MCF 10A (cell line): ENCODE measurements at regions of chr3 and their contacts with region 1.

Region 1: DNA sequence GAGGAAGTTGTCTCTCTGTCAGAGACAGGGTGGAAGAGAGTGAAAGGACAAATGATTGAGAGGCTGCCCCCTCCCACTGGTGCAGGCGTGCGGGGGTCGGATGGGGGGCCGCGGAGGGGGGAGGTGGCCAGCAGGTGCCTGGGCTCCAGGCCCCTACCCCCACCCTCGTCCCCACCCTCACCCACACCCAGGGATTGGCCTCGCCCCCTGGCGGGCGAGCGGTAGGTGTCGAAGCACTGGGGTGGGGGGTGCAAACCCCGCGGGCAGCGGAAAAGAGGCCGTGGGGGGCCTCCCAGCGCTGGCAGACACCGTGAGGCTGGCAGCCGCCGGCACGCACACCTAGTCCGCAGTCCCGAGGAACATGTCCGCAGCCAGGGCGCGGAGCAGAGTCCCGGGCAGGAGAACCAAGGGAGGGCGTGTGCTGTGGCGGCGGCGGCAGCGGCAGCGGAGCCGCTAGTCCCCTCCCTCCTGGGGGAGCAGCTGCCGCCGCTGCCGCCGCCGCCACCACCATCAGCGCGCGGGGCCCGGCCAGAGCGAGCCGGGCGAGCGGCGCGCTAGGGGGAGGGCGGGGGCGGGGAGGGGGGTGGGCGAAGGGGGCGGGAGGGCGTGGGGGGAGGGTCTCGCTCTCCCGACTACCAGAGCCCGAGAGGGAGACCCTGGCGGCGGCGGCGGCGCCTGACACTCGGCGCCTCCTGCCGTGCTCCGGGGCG is at the start of gene KAT2B:
- DNase-seq: peak; percentile 70
- H3K4me3 Mint-ChIP-seq: peak within 1 kb of the TSS; percentile 95
- H3K27ac Mint-ChIP-seq: peak within 1 kb of the TSS; percentile 70
- H3K4me1 Mint-ChIP-seq: peaks cover 23% of the 10 kb centered on the region
- H3K27me3 Mint-ChIP-seq: no peaks in the 10 kb centered on the region
- CTCF ChIP-seq: no peak
- total RNA-seq, gene KAT2B: 9.4 and 10.4 TPM in 2 replicates

Region 2: DNA sequence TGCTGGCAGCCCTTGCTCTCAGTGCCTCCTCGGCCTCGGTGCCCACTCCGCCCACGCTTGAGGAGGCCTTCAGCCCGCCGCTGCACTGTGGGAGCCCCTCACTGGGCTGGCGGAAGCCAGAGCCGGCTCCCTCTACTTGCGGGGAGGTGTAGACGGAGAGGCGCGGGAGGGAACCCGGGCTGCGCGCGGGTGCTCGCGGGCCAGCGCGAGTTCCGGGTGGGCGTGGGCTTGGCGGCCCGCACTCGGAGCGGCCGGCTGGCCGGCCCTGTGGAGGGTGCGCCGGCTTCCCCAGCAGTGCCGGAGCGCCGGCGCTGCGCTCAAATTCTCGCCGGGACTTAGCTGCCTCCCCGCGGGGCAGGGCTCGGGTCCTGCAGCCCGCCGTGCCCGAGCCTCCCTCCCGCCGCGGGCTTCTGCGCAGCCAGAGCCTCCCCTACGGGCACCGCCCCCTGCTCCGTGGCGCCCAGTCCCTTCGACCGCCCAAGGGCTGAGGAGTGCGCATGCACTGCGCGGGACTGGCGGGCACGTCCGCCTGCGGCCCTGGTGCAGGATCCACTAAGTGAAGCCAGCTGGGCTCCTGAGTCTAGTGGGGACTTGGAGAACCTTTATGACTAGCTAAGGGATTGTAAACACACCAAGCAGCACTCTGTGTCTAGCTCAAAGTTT is 337.4 kb before region 1 on chr3:
- CTCF ChIA-PET with region 1: no interaction called
- POLR2A ChIA-PET with region 1: no interaction called
- intact Hi-C with region 1: no loop called
- DNase-seq: no peak
- H3K4me3 Mint-ChIP-seq: no peak overlapping the region
- H3K27ac Mint-ChIP-seq: no peak overlapping the region
- H3K4me1 Mint-ChIP-seq: no peaks in the 10 kb centered on the region
- H3K27me3 Mint-ChIP-seq: no peaks in the 10 kb centered on the region
- CTCF ChIP-seq: no peak

Region 3: GRCh38 chr3:19885468-19885867 is 154.5 kb before region 1 on chr3:
- CTCF ChIA-PET with region 1: no interaction called
- POLR2A ChIA-PET with region 1: no interaction called
- intact Hi-C with region 1: loop called (anchors 5 kb)
- DNase-seq: peak; percentile 45
- H3K4me3 Mint-ChIP-seq: no peak overlapping the region
- H3K27ac Mint-ChIP-seq: no peak overlapping the region
- H3K4me1 Mint-ChIP-seq: peaks cover 15% of the 10 kb centered on the region
- H3K27me3 Mint-ChIP-seq: no peaks in the 10 kb centered on the region
- CTCF ChIP-seq: peak; percentile 38

Region 4: GRCh38 chr3:19946832-19947548 is 92.9 kb before region 1 on chr3 and contains the start of gene RAB5A:
- CTCF ChIA-PET with region 1: no interaction called
- POLR2A ChIA-PET with region 1: interaction called, 26 read pairs
- intact Hi-C with region 1: loop called (anchors 2 kb)
- DNase-seq: peak; percentile 98
- H3K4me3 Mint-ChIP-seq: peak within 1 kb of the TSS; percentile 85
- H3K27ac Mint-ChIP-seq: peak within 1 kb of the TSS; percentile 98
- H3K4me1 Mint-ChIP-seq: peaks cover 13% of the 10 kb centered on the region
- H3K27me3 Mint-ChIP-seq: no peaks in the 10 kb centered on the region
- CTCF ChIP-seq: no peak
- total RNA-seq, gene RAB5A: 89.8 and 102 TPM in 2 replicates

Region 5: GRCh38 chr3:20054549-20054987 is 14.6 kb after region 1 on chr3:
- CTCF ChIA-PET with region 1: interaction called, 19 read pairs
- POLR2A ChIA-PET with region 1: interaction called, 88 read pairs
- intact Hi-C with region 1: loop called (anchors 2 kb)
- DNase-seq: peak; percentile 100
- H3K4me3 Mint-ChIP-seq: no peak overlapping the region
- H3K27ac Mint-ChIP-seq: no peak overlapping the region
- H3K4me1 Mint-ChIP-seq: no peaks in the 10 kb centered on the region
- H3K27me3 Mint-ChIP-seq: no peaks in the 10 kb centered on the region
- CTCF ChIP-seq: no peak

Region 6: DNA sequence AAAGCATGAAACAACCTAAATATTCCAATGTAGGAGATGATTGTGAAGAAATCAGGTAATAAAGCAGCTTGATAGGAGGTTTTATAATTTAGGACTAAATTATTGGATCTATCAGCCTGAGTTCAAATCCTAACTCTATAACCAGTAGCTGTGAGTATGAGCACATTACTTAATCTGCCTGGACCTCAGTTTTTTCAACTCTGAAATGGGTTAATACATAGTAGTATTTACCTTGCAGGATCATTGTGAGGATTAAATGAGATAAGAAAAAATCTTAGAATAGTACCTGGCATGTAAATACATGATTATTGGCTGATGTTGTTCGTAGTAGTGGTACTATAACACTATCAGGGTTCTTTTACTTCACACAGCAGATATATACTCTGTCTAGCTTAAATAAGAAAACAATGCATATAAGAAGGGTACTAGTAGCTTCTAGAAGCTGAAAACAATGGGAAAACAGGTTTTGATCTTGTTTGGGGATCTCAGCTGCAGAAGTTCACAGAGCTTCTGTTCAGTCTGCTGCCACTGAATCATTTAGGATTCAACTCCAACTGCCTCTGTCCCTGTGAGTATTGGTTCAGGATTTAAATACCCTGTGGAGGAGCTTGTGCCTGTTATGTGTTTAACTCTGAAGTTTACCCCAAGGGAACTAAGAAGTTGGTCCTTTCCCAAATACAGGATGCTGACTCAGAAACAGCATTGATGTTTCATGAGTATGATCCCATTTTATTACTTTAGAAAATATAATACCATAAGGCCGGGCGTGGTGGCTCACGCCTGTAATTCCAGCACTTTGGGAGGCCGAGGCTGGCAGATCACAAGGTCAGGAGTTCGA is 34.5 kb after region 1 on chr3:
- CTCF ChIA-PET with region 1: no interaction called
- POLR2A ChIA-PET with region 1: interaction called, 11 read pairs
- intact Hi-C with region 1: no loop called
- DNase-seq: peak; percentile 21
- H3K4me3 Mint-ChIP-seq: no peak overlapping the region
- H3K27ac Mint-ChIP-seq: no peak overlapping the region
- H3K4me1 Mint-ChIP-seq: no peaks in the 10 kb centered on the region
- H3K27me3 Mint-ChIP-seq: no peaks in the 10 kb centered on the region
- CTCF ChIP-seq: no peak

Region 7: DNA sequence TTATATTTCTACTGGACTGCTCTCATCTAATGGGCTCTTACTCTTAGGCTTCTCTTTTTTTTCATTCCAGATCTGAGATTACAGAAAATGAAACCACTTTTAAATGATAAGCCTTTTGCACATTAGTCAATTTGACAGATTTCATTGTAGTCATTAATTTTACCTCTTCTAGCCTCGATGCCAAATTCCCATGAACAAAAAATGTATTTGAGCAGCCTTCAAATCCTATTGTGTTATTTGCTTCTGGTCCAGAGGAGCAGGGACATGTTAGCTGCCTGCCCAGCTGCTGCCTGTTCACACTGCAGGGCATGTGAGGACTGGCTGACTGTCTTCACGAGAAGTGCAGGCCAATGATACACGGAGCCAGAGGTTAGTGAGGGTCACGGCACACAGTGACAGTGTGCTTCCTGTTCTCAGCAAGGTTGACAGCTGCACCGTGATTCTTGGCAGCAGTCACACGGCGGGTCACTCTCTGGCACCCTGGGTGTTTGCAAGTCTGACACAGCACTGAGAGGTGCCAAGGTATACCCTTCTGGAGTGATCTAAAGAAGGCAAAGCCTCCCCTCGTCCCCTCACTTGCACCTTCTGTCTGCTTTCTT is 41.1 kb after region 1 on chr3:
- CTCF ChIA-PET with region 1: interaction called, 3 read pairs
- POLR2A ChIA-PET with region 1: interaction called, 11 read pairs
- intact Hi-C with region 1: no loop called
- DNase-seq: peak; percentile 50
- H3K4me3 Mint-ChIP-seq: no peak overlapping the region
- H3K27ac Mint-ChIP-seq: no peak overlapping the region
- H3K4me1 Mint-ChIP-seq: peaks cover 15% of the 10 kb centered on the region
- H3K27me3 Mint-ChIP-seq: no peaks in the 10 kb centered on the region
- CTCF ChIP-seq: no peak

Region 8: GRCh38 chr3:20185701-20186598 is 146.0 kb after region 1 on chr3 and contains the start of gene SGO1:
- CTCF ChIA-PET with region 1: interaction called, 5 read pairs
- POLR2A ChIA-PET with region 1: interaction called, 71 read pairs
- intact Hi-C with region 1: loop called (anchors 1 kb)
- DNase-seq: peak; percentile 98
- H3K4me3 Mint-ChIP-seq: no peak within 1 kb of the TSS
- H3K27ac Mint-ChIP-seq: no peak within 1 kb of the TSS
- H3K4me1 Mint-ChIP-seq: no peaks in the 10 kb centered on the region
- H3K27me3 Mint-ChIP-seq: no peaks in the 10 kb centered on the region
- CTCF ChIP-seq: no peak
- total RNA-seq, gene SGO1: 6.8 and 12.2 TPM in 2 replicates